ENCODE measurements at regions of chr5 and their contacts with region 1.

Region 1: GRCh38 chr5:18686253-18686652 is 1052.0 kb downstream of the TAF11L14 start:
- DNase-seq: no peak
- H3K4me3 ChIP-seq: no peak overlapping the region
- H3K27ac ChIP-seq: no peak overlapping the region
- H3K4me1 ChIP-seq: no peaks in the 10 kb centered on the region
- H3K27me3 ChIP-seq: no peaks in the 10 kb centered on the region
- CTCF ChIP-seq: no peak

Region 2: DNA sequence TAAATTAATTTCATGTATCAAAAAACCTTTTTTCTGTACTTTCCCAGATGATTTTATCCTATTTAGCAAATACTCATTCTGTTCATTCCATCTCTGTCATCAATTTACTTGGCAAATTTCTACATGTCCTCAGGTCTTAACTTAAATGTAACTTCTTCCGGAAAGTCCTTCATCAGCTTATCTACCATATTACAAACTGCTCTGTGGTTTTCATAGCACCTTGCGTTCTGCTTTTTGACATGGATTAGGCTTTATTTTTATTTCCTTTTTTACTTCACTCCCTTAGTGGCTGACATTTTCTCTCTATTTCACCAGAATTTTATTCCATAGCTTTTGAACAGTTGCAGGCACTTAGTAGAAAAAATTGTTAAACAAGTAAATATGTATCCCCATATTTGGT is 11.2 kb before region 1 on chr5:
- CTCF ChIA-PET with region 1: no interaction called
- POLR2A ChIA-PET with region 1: interaction called, 11 read pairs
- intact Hi-C with region 1: no loop called
- DNase-seq: no peak
- H3K4me3 ChIP-seq: no peak overlapping the region
- H3K27ac ChIP-seq: no peak overlapping the region
- H3K4me1 ChIP-seq: no peaks in the 10 kb centered on the region
- H3K27me3 ChIP-seq: no peaks in the 10 kb centered on the region
- CTCF ChIP-seq: no peak